Activated CD4-positive, alpha-beta T cell treated with anti-CD3 and anti-CD28 coated beads, Interleukin-2, amount 10 ng/mL, durations not matched to agents 24 days and 14 days (primary cell): ENCODE measurements at regions of chr14 and their contacts with region 1.

Region 1: GRCh38 chr14:81220830-81221578 is at the start of gene GTF2A1:
- DNase-seq: peak; percentile 98
- H3K4me3 Mint-ChIP-seq: peak within 1 kb of the TSS; percentile 98
- H3K27ac Mint-ChIP-seq: peak within 1 kb of the TSS; percentile 100
- H3K4me1 Mint-ChIP-seq: peaks cover 27% of the 10 kb centered on the region
- H3K27me3 Mint-ChIP-seq: no peaks in the 10 kb centered on the region
- total RNA-seq, gene GTF2A1: 42.6 and 43.4 TPM in 2 replicates

Region 2: DNA sequence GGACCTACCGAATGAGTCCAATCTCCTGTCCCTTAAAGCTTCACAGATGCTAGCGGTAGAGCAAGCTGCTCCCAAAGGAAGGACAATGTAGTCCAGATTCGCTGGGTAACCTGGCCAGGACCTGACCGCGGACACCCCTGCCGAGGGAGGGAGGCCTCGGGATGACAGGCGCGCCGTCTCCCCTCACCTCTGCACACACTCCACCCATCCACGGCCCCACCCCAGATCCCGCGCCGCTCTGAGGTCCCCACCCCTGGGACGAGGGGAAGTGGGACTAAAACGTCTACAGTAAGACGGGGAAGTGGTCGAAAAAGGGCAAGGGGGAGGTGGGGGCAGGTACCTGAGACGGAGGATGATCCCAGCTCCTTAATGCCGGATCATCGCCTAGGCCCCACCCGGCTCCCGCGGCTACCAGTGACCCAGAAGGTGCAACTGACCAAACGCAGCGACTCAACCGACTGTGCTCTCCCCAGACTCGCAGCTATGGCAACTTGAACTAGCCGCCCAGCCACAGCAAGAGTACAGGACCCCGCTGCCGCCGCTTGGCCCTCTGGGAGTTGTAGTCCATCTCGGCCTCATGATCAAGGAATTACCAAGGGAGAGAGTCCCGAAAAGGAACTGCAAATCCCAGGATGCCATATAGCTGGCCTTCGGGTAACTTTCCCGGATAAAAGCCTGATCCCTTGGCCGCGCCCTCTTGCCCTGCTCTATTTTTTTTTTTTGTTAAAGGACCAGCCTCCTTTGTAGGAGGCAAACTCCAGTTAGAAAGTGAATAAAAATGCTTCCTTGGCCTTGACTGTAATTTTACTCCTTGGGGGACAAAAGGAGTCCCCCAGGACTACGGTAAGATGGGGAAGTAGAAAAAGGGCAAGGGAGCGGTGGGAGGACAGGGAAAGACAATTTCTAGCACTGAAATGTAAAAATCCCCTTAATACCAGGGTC is 279.5 kb before region 1 on chr14 and contains the start of gene CEP128:
- intact Hi-C with region 1: loop called (anchors 1 kb)
- DNase-seq: peak; percentile 95
- H3K4me3 Mint-ChIP-seq: peak within 1 kb of the TSS; percentile 84
- H3K27ac Mint-ChIP-seq: peak within 1 kb of the TSS; percentile 85
- H3K4me1 Mint-ChIP-seq: peaks cover 27% of the 10 kb centered on the region
- H3K27me3 Mint-ChIP-seq: no peaks in the 10 kb centered on the region
- total RNA-seq, gene CEP128: 20.1 and 20.4 TPM in 2 replicates

Region 3: DNA sequence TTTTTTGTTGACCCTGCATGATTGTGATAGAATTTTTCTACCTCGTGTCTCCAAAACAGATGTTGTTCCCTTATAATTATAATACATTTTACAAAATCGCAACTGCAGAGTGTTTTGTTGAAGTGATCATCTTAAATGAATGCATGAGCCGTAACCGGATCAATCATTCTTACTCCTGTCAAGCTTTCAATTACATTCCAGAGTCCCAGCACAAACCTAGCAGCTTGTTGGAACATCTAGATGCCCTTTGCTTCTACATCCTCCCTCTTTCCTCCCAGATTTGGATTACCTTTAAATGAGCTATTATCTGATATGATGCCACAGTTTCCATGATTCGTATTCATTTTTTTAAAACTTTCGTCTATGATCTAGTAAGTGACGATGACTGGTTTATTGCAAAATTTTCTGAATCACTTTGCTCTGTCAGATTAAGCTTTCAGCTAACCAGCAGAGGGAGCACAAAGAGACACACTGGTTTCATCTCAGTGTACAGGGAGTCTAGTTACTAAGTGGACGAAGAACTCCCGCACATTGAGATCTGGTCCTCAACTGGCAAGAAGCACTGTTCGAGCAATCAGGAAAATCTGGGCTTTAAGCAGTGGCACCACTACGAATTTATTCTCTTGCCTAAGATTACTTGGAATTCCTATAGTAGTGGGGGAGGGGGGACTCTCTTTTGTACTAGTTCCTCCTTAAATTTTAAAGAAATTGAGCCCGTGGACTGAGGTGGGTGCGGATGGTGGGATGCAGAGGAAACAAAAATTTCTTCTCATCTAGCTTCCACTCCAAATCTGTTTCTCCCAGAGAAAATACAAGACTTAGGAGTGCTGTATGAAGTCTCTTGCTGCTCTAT is 224.7 kb before region 1 on chr14:
- intact Hi-C with region 1: loop called (anchors 2 kb)
- DNase-seq: peak; percentile 80
- H3K4me3 Mint-ChIP-seq: no peak overlapping the region
- H3K27ac Mint-ChIP-seq: no peak overlapping the region
- H3K4me1 Mint-ChIP-seq: peaks cover 5% of the 10 kb centered on the region
- H3K27me3 Mint-ChIP-seq: peaks cover 49% of the 10 kb centered on the region

Region 4: GRCh38 chr14:81147140-81147897 is 73.7 kb before region 1 on chr14:
- intact Hi-C with region 1: no loop called
- DNase-seq: no peak
- H3K4me3 Mint-ChIP-seq: no peak overlapping the region
- H3K27ac Mint-ChIP-seq: no peak overlapping the region
- H3K4me1 Mint-ChIP-seq: peaks cover 11% of the 10 kb centered on the region
- H3K27me3 Mint-ChIP-seq: no peaks in the 10 kb centered on the region

Region 5: GRCh38 chr14:81209167-81209836 is 11.7 kb before region 1 on chr14:
- intact Hi-C with region 1: no loop called
- DNase-seq: no peak
- H3K4me3 Mint-ChIP-seq: no peak overlapping the region
- H3K27ac Mint-ChIP-seq: no peak overlapping the region
- H3K4me1 Mint-ChIP-seq: peaks cover 24% of the 10 kb centered on the region
- H3K27me3 Mint-ChIP-seq: no peaks in the 10 kb centered on the region

Region 6: DNA sequence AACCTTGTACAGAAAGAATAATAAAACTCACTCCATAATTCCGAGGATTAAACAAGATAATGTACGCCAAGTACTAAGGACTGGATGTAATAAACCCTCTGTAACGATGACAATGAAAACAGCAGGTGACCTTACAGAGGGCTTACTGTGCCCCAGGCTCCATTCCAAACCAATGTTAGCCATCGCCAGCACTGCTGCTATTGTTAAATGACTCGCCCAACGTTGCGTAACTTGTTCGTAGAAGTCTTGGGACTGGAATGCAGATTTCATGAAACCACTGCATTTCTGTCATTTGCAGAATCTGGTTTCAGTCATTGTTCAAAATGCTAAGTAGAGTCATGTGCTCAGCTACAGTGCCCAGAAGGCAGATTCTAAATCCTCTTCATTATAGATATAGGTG is 179.8 kb after region 1 on chr14:
- intact Hi-C with region 1: loop called (anchors 5 kb)
- DNase-seq: no peak
- H3K4me3 Mint-ChIP-seq: no peak overlapping the region
- H3K27ac Mint-ChIP-seq: peak overlapping the region; percentile 56
- H3K4me1 Mint-ChIP-seq: peaks cover 18% of the 10 kb centered on the region
- H3K27me3 Mint-ChIP-seq: peaks cover 13% of the 10 kb centered on the region

Region 7: DNA sequence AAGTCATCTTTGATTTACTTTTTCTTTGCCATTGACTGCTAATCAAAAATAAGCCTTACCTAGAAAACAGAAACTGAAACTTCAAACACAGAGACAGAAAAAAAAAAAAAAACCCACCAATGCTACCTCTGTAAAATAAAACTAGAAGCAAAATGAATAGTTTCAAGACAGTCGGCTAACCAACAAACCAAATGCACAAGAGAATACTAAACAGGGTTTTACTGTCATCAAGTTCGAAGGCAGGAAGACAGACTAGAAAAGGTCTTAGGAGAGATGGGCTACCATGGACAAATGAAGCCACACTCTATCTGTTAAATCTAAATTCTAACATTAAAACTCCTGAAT is 253.1 kb after region 1 on chr14:
- intact Hi-C with region 1: loop called (anchors 2 kb)
- DNase-seq: peak; percentile 71
- H3K4me3 Mint-ChIP-seq: peak overlapping the region; percentile 68
- H3K27ac Mint-ChIP-seq: peak overlapping the region; percentile 88
- H3K4me1 Mint-ChIP-seq: peaks cover 55% of the 10 kb centered on the region
- H3K27me3 Mint-ChIP-seq: no peaks in the 10 kb centered on the region